Transverse colon (tissue), 4 donors: ENCODE measurements at regions of chr1 and their contacts with region 1.

Region 1: GRCh38 chr1:40079774-40080400 is 17.2 kb downstream of the PPT1 start:
- DNase-seq: no peak
- H3K4me3 ChIP-seq: no peak overlapping the region
- H3K27ac ChIP-seq: peak overlapping the region; percentile 22 to 51 (median 32)
- H3K4me1 ChIP-seq: peaks cover 0 to 21% (median 4%) of the 10 kb centered on the region in 4 donors
- H3K27me3 ChIP-seq: no peaks in the 10 kb centered on the region
- CTCF ChIP-seq: no peak
- EP300 ChIP-seq: no peak
- POLR2A ChIP-seq: no peak

Region 2: DNA sequence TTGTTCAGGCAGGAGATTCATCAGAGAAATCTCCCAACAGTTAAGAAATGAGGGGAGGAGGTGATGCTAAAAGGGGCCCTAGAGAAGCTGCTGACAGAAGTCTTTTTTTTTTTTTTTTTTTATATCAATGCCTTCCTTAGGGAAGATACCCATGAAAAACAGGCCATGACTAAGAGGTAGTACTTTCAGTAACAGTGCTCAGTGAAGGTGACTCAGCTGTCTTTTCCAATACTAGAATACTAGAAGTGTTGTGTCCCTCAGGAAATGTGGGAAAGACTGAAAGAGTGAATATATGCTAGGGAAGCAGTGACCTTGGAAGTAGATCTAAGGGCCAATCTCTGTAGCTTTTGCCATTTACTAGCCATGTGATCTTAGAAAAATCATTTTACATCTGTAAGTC is 994.1 kb after region 1 on chr1:
- in situ Hi-C with region 1: no loop called
- intact Hi-C with region 1: loop called (anchors 5 kb)
- DNase-seq: no peak
- H3K4me3 ChIP-seq: no peak overlapping the region
- H3K27ac ChIP-seq: no peak overlapping the region
- H3K4me1 ChIP-seq: no peaks in the 10 kb centered on the region
- H3K27me3 ChIP-seq: no peaks in the 10 kb centered on the region
- CTCF ChIP-seq: no peak
- EP300 ChIP-seq: no peak
- POLR2A ChIP-seq: no peak